Left ventricle myocardium superior (tissue), 1 donor: ENCODE measurements at regions of chr4 and their contacts with region 1.

Region 1: GRCh38 chr4:88514557-88515511 is 8.7 kb downstream of the PYURF start:
- DNase-seq: no peak
- ATAC-seq: no peak

Region 2: GRCh38 chr4:88211473-88212252 is 303.2 kb before region 1 on chr4:
- intact Hi-C with region 1: loop called (anchors 5 kb)
- DNase-seq: no peak
- ATAC-seq: peak; percentile 63

Region 3: GRCh38 chr4:88308587-88308986 is 206.2 kb before region 1 on chr4:
- intact Hi-C with region 1: no loop called
- DNase-seq: no peak
- ATAC-seq: no peak

Region 4: GRCh38 chr4:88378691-88379559 is 135.9 kb before region 1 on chr4 and contains the start of gene HERC6:
- intact Hi-C with region 1: loop called (anchors 10 kb)
- DNase-seq: peak; percentile 87
- ATAC-seq: peak; percentile 99
- total RNA-seq, gene HERC6: 9.3 TPM

Region 5: GRCh38 chr4:88583631-88584475 is 69.0 kb after region 1 on chr4:
- intact Hi-C with region 1: no loop called
- DNase-seq: no peak
- ATAC-seq: peak; percentile 95